ENCODE measurements at regions of chr3 and their contacts with region 1.

Region 1: GRCh38 chr3:128665362-128666038 is 14.9 kb upstream of the RPN1 start:
- DNase-seq: peak; percentile 47
- H3K4me3 ChIP-seq: no peak overlapping the region
- H3K27ac ChIP-seq: no peak overlapping the region
- H3K4me1 ChIP-seq: peaks cover 0 to 3% (median 0%) of the 10 kb centered on the region in 6 donors
- H3K27me3 ChIP-seq: no peaks in the 10 kb centered on the region
- CTCF ChIP-seq: no peak
- POLR2A ChIP-seq: no peak

Region 2: DNA sequence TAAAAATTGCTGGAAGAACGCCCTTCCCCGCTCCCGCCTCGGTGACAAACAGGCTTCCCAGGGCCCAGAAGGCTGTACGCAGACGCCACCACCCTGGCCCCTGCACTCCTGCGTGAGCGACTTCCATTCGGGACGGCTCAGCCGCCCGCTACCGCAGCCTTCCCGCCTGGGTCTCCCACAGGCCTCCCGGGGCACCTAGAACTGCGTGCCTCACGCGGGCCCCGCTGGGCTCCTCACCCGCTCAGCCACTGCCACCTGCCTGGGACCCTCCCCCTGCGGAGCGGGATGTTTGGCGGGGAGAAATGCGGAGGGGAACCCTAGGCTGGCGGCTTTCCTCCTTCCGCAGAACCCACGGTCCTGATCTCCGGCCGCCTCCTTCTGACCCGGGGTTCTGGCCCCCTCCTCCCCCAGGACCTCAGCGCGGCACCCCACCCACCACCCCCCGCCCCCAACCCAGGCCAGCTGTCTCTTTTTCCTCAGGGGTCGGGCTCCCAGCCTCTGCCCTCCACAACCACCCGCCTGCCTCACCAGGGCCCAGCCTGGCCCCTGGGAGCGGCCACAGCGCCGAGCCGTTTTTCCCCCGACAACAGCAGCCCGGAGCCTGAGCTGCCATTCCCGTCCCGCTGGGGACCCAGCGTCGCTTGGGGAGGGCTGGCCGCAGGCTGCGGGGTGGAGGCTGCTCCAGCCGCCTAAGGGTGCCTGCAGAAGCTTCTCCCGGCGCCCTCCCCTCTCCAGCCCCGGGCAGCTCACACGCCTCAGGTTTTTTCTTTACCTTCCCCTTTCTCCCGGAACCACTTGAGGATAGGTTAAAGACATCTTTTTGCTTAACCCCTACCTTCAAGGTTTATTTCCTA is 32.9 kb after region 1 on chr3:
- intact Hi-C with region 1: loop called (anchors 1 kb)
- DNase-seq: peak; percentile 83
- H3K4me3 ChIP-seq: peak overlapping the region; percentile 26 to 73 (median 44)
- H3K27ac ChIP-seq: peak overlapping the region in 7 of 8 donors; percentile 63 to 86 (median 72)
- H3K4me1 ChIP-seq: peaks cover 0 to 42% (median 14%) of the 10 kb centered on the region in 6 donors
- H3K27me3 ChIP-seq: peaks cover 0 to 5% (median 0%) of the 10 kb centered on the region in 7 donors
- CTCF ChIP-seq: no peak
- POLR2A ChIP-seq: no peak